ENCODE measurements at regions of chr2 and their contacts with region 1.

Region 1: DNA sequence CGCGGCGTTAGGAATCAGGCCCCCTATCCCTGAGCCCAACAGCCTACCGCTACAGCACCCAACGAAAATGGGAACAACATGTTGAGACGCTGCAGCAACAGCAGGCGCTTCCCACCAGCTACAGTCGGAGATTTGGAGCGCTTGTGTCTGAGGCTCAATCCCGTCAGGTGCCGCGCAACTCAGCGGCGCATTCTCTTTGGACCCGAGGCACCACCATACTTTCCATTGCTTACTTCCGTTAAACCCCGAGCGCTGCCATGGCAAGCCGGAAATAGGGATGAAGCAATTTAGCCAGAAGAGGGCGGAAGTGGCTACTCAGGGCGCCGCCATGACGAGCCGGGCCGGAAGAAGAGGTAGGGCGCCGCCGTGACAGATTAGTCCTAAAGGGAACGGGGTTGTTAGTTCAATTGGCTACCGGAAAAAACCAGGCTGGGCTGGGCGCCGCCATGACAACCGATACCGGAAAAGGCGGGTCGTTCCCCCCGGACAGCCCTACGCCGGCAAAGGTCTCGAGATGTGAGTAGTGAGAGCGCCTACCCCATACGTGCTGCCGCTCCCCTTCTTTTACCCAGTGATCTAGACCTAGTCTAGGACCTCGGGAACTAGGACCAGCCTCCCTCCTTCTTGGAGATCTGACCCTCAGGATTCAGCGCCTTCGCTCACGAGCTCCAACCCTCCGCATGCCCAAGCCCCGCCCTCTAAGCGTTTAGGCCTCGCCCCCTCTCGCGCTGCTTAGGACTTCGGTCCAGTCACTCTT is at the start of gene CHCHD5:
- DNase-seq: peak; percentile 97 to 98
- ATAC-seq: peak; percentile 96
- H3K4me3 ChIP-seq: peak within 1 kb of the TSS; percentile 35 to 83
- H3K27ac ChIP-seq: peak within 1 kb of the TSS in 1 of 2 donors; percentile 83
- H3K4me1 ChIP-seq: peaks cover 0 to 2% of the 10 kb centered on the region in 2 donors
- H3K27me3 ChIP-seq: no peaks in the 10 kb centered on the region
- total RNA-seq, gene CHCHD5: 19.0 to 19.2 TPM

Region 2: DNA sequence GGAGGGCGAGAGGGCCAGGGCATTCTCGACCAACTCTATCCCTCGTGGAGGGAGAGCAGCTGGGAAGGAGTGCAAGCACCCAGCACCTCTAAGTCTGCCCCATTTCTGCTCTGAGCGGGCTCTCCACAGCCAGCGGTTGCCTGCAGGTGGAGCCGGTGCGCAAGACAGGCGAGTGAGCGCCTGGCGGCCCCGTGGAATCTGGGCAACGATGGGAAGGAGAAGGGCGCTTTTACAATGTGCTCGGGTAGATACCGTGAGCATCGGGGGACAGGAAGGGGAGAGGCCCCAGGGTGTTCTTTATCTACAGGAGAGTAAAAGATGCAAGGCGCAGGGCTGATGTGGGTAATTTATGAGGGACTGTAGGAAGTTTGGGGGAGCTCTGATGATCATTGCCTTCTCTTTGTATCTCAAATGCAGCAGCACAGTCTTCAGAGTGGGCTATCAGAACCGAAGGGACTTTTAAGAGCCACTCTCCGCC is 103.2 kb before region 1 on chr2:
- intact Hi-C with region 1: loop called (anchors 5 to 10 kb)
- DNase-seq: peak; percentile 89 to 94
- ATAC-seq: peak; percentile 92
- H3K4me3 ChIP-seq: peak overlapping the region; percentile 92 to 95
- H3K27ac ChIP-seq: peak overlapping the region in 1 of 2 donors; percentile 30
- H3K4me1 ChIP-seq: no peaks in the 10 kb centered on the region
- H3K27me3 ChIP-seq: no peaks in the 10 kb centered on the region

Region 3: DNA sequence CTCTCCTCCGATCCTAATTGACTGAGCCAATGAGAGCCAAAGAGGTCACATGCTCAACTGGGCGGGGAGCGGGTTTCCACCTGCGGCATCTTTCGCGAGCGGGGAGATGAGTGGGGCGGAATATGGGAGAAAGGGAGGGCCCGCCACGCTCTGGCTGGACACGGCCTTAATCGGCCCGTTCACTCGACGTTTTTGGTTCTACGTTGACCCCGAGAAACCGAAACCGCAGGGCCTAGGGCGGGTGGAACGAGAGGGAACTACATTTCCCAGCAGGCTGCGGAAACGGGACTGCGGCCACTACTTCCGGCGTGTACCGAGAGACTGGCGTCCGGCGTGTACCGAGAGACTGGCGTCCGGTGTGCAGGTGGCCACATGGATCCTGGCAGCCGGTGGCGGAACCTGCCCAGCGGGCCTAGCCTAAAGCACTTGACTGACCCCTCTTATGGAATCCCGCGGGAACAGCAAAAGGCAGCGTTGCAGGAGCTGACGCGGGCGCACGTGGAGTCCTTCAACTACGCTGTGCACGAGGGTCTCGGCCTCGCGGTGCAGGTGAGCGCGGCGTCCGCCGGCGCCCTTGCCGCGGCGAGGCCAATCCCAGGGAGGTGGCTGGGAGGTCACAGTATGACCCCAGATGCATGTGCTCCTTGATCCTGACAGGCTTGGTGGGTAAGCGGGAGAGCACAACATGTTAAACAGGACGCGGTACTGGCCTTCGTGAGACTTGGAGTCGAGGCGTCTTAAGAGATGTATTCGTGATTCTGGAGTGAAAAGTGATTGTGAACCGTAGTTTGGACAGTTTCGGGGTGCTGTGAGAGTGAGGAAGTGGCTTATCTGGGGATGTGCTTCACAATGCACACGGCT is 42.0 kb before region 1 on chr2 and contains the start of gene POLR1B:
- intact Hi-C with region 1: loop called in 1 of 2 experiments (anchors 5 kb)
- DNase-seq: peak; percentile 90 to 93
- ATAC-seq: peak; percentile 96
- H3K4me3 ChIP-seq: peak within 1 kb of the TSS; percentile 36 to 78
- H3K27ac ChIP-seq: peak within 1 kb of the TSS; percentile 51 to 78
- H3K4me1 ChIP-seq: peaks cover 0 to 5% of the 10 kb centered on the region in 2 donors
- H3K27me3 ChIP-seq: no peaks in the 10 kb centered on the region
- total RNA-seq, gene POLR1B: 9.4 to 13.5 TPM

Region 4: DNA sequence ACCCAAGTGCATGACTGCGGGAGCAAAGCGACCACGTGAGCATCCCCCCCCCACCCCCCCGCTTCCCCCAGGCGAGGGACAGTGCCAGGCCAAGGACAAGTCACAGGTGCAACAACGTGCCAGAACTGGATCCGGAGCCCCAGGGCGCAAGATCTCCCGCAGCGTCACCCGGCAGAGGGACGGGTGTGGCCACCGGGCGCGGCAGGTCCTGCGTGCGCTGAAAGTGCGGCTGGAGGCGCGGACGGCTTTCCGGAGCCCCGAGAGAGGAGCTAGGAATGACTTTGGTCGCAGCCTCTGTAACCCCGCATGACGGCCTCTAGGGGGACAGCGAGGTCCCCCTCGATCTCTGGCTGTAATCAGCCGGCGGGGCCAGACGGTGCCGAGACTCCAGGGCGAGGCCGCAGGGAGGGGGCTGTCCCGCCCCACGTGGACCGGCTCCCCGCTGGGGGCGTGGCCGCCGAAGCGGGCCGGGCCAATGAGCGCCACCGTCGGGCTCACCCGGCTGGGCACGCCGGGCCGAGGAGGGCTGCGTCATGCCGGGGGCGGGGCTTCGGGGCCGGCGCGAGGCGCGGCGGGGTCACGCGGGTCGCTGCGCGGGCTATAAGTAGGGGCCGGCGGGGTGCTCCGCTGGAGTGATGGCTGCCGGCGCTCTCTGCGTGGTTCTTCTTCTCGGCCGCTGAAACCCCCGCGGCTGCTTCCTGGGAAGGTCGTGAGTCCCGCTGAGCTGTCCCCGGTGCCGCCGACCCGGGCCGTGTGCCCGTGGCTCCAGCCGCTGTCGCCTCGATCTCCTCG is 61.2 kb after region 1 on chr2 and contains the start of gene SLC20A1:
- intact Hi-C with region 1: loop called (anchors 1 to 10 kb)
- DNase-seq: peak; percentile 97 to 99
- ATAC-seq: peak; percentile 98
- H3K4me3 ChIP-seq: peak within 1 kb of the TSS; percentile 89 to 92
- H3K27ac ChIP-seq: peak within 1 kb of the TSS; percentile 37 to 96
- H3K4me1 ChIP-seq: peaks cover 2 to 4% of the 10 kb centered on the region in 2 donors
- H3K27me3 ChIP-seq: peaks cover 0 to 2% of the 10 kb centered on the region in 2 donors
- total RNA-seq, gene SLC20A1: 51.9 to 82.6 TPM